ENCODE measurements at regions of chr12 and their contacts with region 1.

Region 1: GRCh38 chr12:14167005-14167628 is 185.7 kb upstream of the GRIN2B start:
- DNase-seq: peak in 1 of 2 experiments; percentile 76
- H3K4me3 ChIP-seq: no peak overlapping the region
- H3K27ac ChIP-seq: no peak overlapping the region
- H3K4me1 ChIP-seq: no peaks in the 10 kb centered on the region
- H3K27me3 ChIP-seq: no peaks in the 10 kb centered on the region
- CTCF ChIP-seq: peak; percentile 9 to 94 (median 88)
- EP300 ChIP-seq: no peak
- POLR2A ChIP-seq: no peak
- RAD21 ChIP-seq: peak; percentile 98 to 99

Region 2: DNA sequence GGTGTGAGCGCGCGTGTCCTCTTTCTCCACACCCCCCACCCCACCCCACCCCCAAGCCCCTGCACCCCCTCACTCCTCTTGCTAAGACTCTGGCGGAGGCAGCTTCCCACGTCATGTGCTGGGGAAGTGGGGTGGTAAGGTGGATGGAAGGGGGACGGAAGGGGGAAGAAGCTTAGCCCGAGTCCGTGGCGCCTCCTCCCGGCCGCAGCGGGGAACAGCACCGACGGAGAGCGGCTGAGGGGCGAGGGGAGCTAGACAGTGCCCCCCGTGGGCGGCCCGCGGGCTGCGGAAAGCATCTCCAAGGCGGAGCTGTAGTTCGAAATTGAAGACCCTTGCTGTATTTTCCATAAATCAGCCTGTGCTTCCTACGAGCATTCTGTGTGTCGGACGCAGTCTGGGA is 185.1 kb before region 1 on chr12:
- CTCF ChIA-PET with region 1: interaction called, 12 read pairs
- POLR2A ChIA-PET with region 1: no interaction called
- DNase-seq: peak in 1 of 2 experiments; percentile 96
- H3K4me3 ChIP-seq: peak overlapping the region; percentile 66 to 89 (median 81)
- H3K27ac ChIP-seq: no peak overlapping the region
- H3K4me1 ChIP-seq: no peaks in the 10 kb centered on the region; a peak in 2 of 7 replicates
- H3K27me3 ChIP-seq: peaks cover 8 to 36% (median 25%) of the 10 kb centered on the region in 4 experiments
- CTCF ChIP-seq: peak; percentile 87 to 99 (median 95)
- EP300 ChIP-seq: no peak
- POLR2A ChIP-seq: no peak
- RAD21 ChIP-seq: peak; percentile 84 to 86

Region 3: DNA sequence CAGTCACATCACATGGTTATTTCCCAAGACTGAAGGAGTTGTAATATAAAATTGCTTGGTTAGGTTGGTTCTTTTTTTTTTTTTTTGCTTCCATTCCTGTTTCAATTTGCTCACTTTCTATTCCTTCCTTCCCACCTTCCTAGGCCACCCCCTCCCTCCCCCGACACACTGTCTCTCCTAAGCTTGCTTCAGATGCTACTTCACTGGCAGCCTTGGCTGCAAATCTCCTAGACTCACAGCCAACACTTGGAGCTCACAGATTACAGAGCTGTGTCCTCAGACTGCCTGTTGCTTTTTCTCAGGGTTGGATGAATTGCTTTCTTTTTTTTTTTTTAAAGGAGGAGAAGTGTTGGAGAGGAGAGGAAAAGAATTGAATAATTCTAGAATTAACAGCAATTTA is 108.4 kb before region 1 on chr12:
- CTCF ChIA-PET with region 1: interaction called, 10 read pairs
- POLR2A ChIA-PET with region 1: no interaction called
- DNase-seq: no peak
- H3K4me3 ChIP-seq: no peak overlapping the region
- H3K27ac ChIP-seq: no peak overlapping the region
- H3K4me1 ChIP-seq: no peaks in the 10 kb centered on the region
- H3K27me3 ChIP-seq: peaks cover 0 to 1% (median 0%) of the 10 kb centered on the region in 4 experiments; a peak in 1 of 7 replicates
- CTCF ChIP-seq: no peak
- EP300 ChIP-seq: no peak
- POLR2A ChIP-seq: no peak
- RAD21 ChIP-seq: no peak

Region 4: GRCh38 chr12:14111230-14111865 is 55.8 kb before region 1 on chr12:
- CTCF ChIA-PET with region 1: interaction called, 22 read pairs
- POLR2A ChIA-PET with region 1: no interaction called
- DNase-seq: peak in 1 of 2 experiments; percentile 49
- H3K4me3 ChIP-seq: no peak overlapping the region
- H3K27ac ChIP-seq: no peak overlapping the region
- H3K4me1 ChIP-seq: no peaks in the 10 kb centered on the region
- H3K27me3 ChIP-seq: no peaks in the 10 kb centered on the region
- CTCF ChIP-seq: peak; percentile 60 to 82 (median 62)
- EP300 ChIP-seq: no peak
- POLR2A ChIP-seq: no peak
- RAD21 ChIP-seq: peak; percentile 51 to 63

Region 5: DNA sequence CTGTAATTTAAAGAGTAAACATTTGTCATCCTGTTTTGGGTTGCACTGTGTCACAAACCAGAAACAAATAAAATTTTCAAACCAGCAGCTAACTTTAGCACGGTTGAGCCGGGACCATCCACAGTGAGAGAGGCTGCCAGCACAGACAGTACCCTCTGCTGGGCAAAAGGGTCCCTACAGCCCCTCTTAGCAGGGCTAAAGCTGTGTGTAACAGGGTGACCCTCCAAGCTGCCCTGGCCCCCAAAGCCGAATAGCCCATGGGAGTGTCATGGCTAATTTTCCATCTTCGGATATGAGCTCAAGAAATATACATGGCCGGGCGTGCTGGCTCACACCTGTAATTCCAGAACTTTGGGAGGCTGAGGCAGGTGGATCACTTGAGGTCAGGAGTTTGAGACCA is 28.6 kb before region 1 on chr12:
- CTCF ChIA-PET with region 1: interaction called, 16 read pairs
- POLR2A ChIA-PET with region 1: no interaction called
- DNase-seq: peak in 1 of 2 experiments; percentile 62
- H3K4me3 ChIP-seq: no peak overlapping the region
- H3K27ac ChIP-seq: no peak overlapping the region
- H3K4me1 ChIP-seq: no peaks in the 10 kb centered on the region
- H3K27me3 ChIP-seq: no peaks in the 10 kb centered on the region
- CTCF ChIP-seq: peak; percentile 73 to 84 (median 77)
- EP300 ChIP-seq: no peak
- POLR2A ChIP-seq: no peak
- RAD21 ChIP-seq: peak; percentile 63 to 72

Region 6: GRCh38 chr12:14284184-14284722 is 117.1 kb after region 1 on chr12:
- CTCF ChIA-PET with region 1: no interaction called
- POLR2A ChIA-PET with region 1: no interaction called
- DNase-seq: no peak
- H3K4me3 ChIP-seq: peak overlapping the region in 1 of 4 experiments; percentile 27; a peak in 1 of 8 replicates
- H3K27ac ChIP-seq: peak overlapping the region; percentile 35; the same call in 1 of the 2 replicates
- H3K4me1 ChIP-seq: peaks cover 3 to 12% (median 7%) of the 10 kb centered on the region in 4 experiments; a peak in 4 of 7 replicates
- H3K27me3 ChIP-seq: peaks cover 33 to 70% (median 57%) of the 10 kb centered on the region in 4 experiments
- CTCF ChIP-seq: peak in 1 of 3 experiments; percentile 15; a peak in 1 of 4 replicates
- EP300 ChIP-seq: no peak
- POLR2A ChIP-seq: no peak
- RAD21 ChIP-seq: peak in 1 of 2 experiments; percentile 20; a peak in 2 of 4 replicates

Measured in H1 (cell line).